ENCODE measurements at regions of chr11 and their contacts with region 1.

Region 1: GRCh38 chr11:59158206-59159068 is 13.5 kb upstream of the DTX4 start:
- DNase-seq: no peak
- ATAC-seq: peak; percentile 91
- H3K4me3 ChIP-seq: no peak overlapping the region
- H3K27ac ChIP-seq: no peak overlapping the region
- H3K4me1 ChIP-seq: no peaks in the 10 kb centered on the region
- H3K27me3 ChIP-seq: peaks cover 19% of the 10 kb centered on the region
- CTCF ChIP-seq: peak; percentile 87

Region 2: DNA sequence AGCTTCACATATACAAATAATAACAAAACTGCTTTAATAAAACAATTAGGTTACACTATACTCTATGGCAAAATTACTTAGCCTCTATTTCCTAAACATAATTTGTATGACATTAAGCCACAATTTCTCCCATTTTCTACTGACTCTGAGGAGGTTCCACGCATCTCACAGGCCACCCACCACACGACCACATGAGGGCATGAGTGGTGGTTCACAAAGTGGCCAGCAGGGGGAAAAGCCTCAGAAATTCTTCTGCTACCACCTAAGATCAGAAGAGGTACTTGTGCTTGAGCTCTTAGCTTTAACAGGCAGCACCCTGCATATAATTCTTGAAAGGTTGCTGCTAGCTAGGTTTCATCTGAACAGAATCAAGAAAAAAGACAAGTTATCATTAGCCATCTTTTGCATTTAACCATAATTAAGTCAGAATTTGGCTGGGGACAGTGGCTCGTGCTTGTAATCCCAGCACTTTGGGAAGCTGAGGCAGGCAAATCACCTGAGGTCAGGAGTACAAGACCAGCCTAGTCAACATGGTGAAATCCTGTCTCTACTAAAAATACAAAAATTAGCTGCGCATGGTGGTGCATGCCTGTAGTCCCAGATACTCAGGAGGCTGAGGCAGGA is 590.4 kb before region 1 on chr11:
- CTCF ChIA-PET with region 1: no interaction called
- POLR2A ChIA-PET with region 1: no interaction called
- in situ Hi-C with region 1: no loop called
- intact Hi-C with region 1: loop called (anchors 5 kb)
- DNase-seq: peak; percentile 39
- ATAC-seq: peak; percentile 97
- H3K4me3 ChIP-seq: no peak overlapping the region
- H3K27ac ChIP-seq: no peak overlapping the region
- H3K4me1 ChIP-seq: no peaks in the 10 kb centered on the region
- H3K27me3 ChIP-seq: no peaks in the 10 kb centered on the region
- CTCF ChIP-seq: peak; percentile 89

Region 3: GRCh38 chr11:58654079-58654907 is 504.1 kb before region 1 on chr11:
- CTCF ChIA-PET with region 1: no interaction called
- POLR2A ChIA-PET with region 1: no interaction called
- in situ Hi-C with region 1: no loop called
- intact Hi-C with region 1: loop called (anchors 10 kb)
- DNase-seq: no peak
- ATAC-seq: peak; percentile 98
- H3K4me3 ChIP-seq: no peak overlapping the region
- H3K27ac ChIP-seq: no peak overlapping the region
- H3K4me1 ChIP-seq: no peaks in the 10 kb centered on the region; the same call in 1 of the 2 replicates
- H3K27me3 ChIP-seq: no peaks in the 10 kb centered on the region
- CTCF ChIP-seq: peak; percentile 92

Region 4: DNA sequence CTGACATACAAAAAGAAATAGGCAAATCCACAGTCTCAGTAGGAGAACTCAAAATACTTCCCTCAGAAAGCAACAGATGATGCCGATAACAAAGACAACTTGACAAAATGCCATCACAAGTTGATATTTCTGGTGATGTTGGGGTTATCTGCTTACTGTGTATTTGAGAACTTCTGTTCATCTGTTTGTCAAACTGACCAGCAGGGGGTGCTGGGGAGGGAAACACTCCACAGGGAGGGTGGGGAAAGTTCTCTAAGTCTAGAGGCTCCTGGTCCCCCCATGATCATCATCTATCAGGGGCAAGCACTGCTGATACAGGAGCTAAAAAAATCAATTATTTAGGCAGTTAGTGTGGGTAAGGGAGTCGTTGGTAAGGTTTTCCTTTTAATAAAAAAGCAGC is 199.9 kb before region 1 on chr11:
- CTCF ChIA-PET with region 1: no interaction called
- POLR2A ChIA-PET with region 1: no interaction called
- in situ Hi-C with region 1: no loop called
- intact Hi-C with region 1: loop called (anchors 10 kb)
- DNase-seq: no peak
- ATAC-seq: no peak
- H3K4me3 ChIP-seq: no peak overlapping the region
- H3K27ac ChIP-seq: no peak overlapping the region
- H3K4me1 ChIP-seq: no peaks in the 10 kb centered on the region
- H3K27me3 ChIP-seq: no peaks in the 10 kb centered on the region
- CTCF ChIP-seq: peak; percentile 46

Region 5: DNA sequence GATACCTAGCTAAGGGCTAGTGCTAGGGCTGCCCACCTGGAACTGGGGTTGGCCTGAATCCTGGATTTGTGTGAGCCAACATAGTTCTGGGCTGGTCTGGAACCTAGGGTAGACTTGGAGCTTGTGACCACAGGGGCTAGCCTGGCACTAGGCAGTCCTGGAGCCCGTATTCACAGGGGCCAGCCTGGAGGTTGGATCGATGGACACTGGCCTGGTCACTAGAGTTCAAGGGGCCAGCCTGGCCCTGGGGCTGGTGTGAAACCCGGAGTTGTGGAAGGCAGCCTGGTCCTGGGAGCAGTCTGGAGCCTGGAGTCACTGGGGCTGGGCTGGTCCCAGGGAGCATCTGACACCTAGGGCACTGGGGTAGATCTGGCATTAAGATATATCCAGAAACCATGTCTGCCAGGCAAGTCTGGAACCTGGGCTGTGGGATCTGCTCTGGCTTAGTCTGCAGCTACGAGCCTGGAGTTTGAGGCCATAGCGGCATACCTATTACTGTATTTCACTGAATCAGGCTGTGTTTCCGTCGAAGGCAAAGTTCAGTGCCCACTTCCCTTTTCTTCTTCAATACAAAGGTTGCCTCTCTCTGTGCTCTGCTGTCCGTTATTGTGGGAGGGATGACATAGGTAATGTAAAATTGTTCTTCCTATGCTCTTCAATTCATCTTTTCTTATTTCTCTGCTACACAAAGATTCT is 81.4 kb before region 1 on chr11:
- CTCF ChIA-PET with region 1: no interaction called
- POLR2A ChIA-PET with region 1: no interaction called
- in situ Hi-C with region 1: no loop called
- intact Hi-C with region 1: no loop called
- DNase-seq: no peak
- ATAC-seq: no peak
- H3K4me3 ChIP-seq: no peak overlapping the region
- H3K27ac ChIP-seq: no peak overlapping the region
- H3K4me1 ChIP-seq: no peaks in the 10 kb centered on the region
- H3K27me3 ChIP-seq: no peaks in the 10 kb centered on the region
- CTCF ChIP-seq: no peak

Region 6: GRCh38 chr11:59097113-59097708 is 61.2 kb before region 1 on chr11:
- CTCF ChIA-PET with region 1: no interaction called
- POLR2A ChIA-PET with region 1: no interaction called
- in situ Hi-C with region 1: no loop called
- intact Hi-C with region 1: loop called (anchors 1 kb)
- DNase-seq: no peak
- ATAC-seq: no peak
- H3K4me3 ChIP-seq: no peak overlapping the region
- H3K27ac ChIP-seq: no peak overlapping the region
- H3K4me1 ChIP-seq: no peaks in the 10 kb centered on the region
- H3K27me3 ChIP-seq: peaks cover 9% of the 10 kb centered on the region; the same call in 1 of the 2 replicates
- CTCF ChIP-seq: peak; percentile 78

Region 7: GRCh38 chr11:59144579-59145345 is 13.7 kb before region 1 on chr11:
- CTCF ChIA-PET with region 1: interaction called, 13 read pairs
- POLR2A ChIA-PET with region 1: no interaction called
- in situ Hi-C with region 1: no loop called
- intact Hi-C with region 1: no loop called
- DNase-seq: peak; percentile 61
- ATAC-seq: peak; percentile 85
- H3K4me3 ChIP-seq: peak overlapping the region; percentile 87 to 97
- H3K27ac ChIP-seq: peak overlapping the region; percentile 95
- H3K4me1 ChIP-seq: peaks cover 21% of the 10 kb centered on the region
- H3K27me3 ChIP-seq: no peaks in the 10 kb centered on the region
- CTCF ChIP-seq: peak; percentile 67

Region 8: GRCh38 chr11:59178402-59178801 is 20.0 kb after region 1 on chr11:
- CTCF ChIA-PET with region 1: no interaction called
- POLR2A ChIA-PET with region 1: no interaction called
- in situ Hi-C with region 1: no loop called
- intact Hi-C with region 1: no loop called
- DNase-seq: no peak
- ATAC-seq: no peak
- H3K4me3 ChIP-seq: no peak overlapping the region
- H3K27ac ChIP-seq: no peak overlapping the region
- H3K4me1 ChIP-seq: peaks cover under 1% of the 10 kb centered on the region; the same call in 1 of the 2 replicates
- H3K27me3 ChIP-seq: peaks cover 9% of the 10 kb centered on the region
- CTCF ChIP-seq: no peak

Measured in Panc1 (cell line).